ENCODE measurements at regions of chr12 and their contacts with region 1.

Region 1: GRCh38 chr12:52278541-52279421 is 4.3 kb downstream of the KRT86 start:
- DNase-seq: peak; percentile 47 to 71 (median 51)
- H3K4me3 ChIP-seq: no peak overlapping the region
- H3K4me3 Mint-ChIP-seq: peak overlapping the region in 2 of 7 donors; percentile 24 to 43
- H3K27ac ChIP-seq: no peak overlapping the region
- H3K27ac Mint-ChIP-seq: peak overlapping the region in 2 of 8 donors; percentile 29 to 55
- H3K4me1 ChIP-seq: peaks cover 6% of the 10 kb centered on the region
- H3K4me1 Mint-ChIP-seq: peaks cover 6 to 11% (median 10%) of the 10 kb centered on the region in 3 donors
- H3K27me3 ChIP-seq: no peaks in the 10 kb centered on the region
- H3K27me3 Mint-ChIP-seq: peaks cover 22 to 63% of the 10 kb centered on the region in 2 donors

Region 2: GRCh38 chr12:52258335-52258901 is 20.4 kb before region 1 on chr12:
- CTCF ChIA-PET with region 1: interaction called, 11 read pairs
- POLR2A ChIA-PET with region 1: no interaction called
- DNase-seq: no peak
- H3K4me3 ChIP-seq: no peak overlapping the region
- H3K4me3 Mint-ChIP-seq: no peak overlapping the region
- H3K27ac ChIP-seq: no peak overlapping the region
- H3K27ac Mint-ChIP-seq: no peak overlapping the region
- H3K4me1 ChIP-seq: no peaks in the 10 kb centered on the region
- H3K4me1 Mint-ChIP-seq: peaks cover 2 to 14% (median 8%) of the 10 kb centered on the region in 3 donors
- H3K27me3 ChIP-seq: no peaks in the 10 kb centered on the region
- H3K27me3 Mint-ChIP-seq: peaks cover 35 to 68% of the 10 kb centered on the region in 2 donors

Region 3: DNA sequence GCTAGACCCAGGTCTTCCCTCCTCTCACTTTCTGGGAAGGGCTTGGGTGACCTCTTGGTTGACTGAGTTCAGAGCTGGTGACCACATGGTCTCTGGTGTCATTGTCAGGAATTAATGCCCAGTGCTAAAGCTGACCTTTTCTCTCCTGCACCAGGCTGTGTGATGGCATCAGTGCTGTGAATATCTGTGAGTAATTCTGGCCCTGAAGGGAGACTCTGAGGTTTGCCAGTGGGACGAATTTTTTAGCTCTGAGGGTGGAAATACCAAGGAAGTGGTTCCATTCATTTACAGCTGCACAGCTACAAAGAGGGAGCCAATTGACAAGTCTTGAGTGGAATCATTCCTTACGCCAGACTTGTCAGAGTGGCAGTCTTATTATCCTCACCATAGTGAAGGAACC is 10.6 kb before region 1 on chr12:
- CTCF ChIA-PET with region 1: interaction called, 20 read pairs
- POLR2A ChIA-PET with region 1: no interaction called
- DNase-seq: no peak
- H3K4me3 ChIP-seq: no peak overlapping the region
- H3K4me3 Mint-ChIP-seq: no peak overlapping the region
- H3K27ac ChIP-seq: no peak overlapping the region
- H3K27ac Mint-ChIP-seq: no peak overlapping the region
- H3K4me1 ChIP-seq: no peaks in the 10 kb centered on the region
- H3K4me1 Mint-ChIP-seq: no peaks in the 10 kb centered on the region
- H3K27me3 ChIP-seq: no peaks in the 10 kb centered on the region
- H3K27me3 Mint-ChIP-seq: peaks cover 6 to 21% of the 10 kb centered on the region in 2 donors

Measured in CD8-positive, alpha-beta memory T cell (primary cell).